ENCODE measurements at regions of chr11 and their contacts with region 1.

Region 1: GRCh38 chr11:73965076-73965860 is 14.4 kb downstream of the DNAJB13 start:
- DNase-seq: no peak
- ATAC-seq: 0 out of 2 replicates have a peak, but pooled peaks have one; percentile 6
- H3K4me3 ChIP-seq: no peak overlapping the region
- H3K27ac ChIP-seq: no peak overlapping the region
- H3K4me1 ChIP-seq: no peaks in the 10 kb centered on the region
- H3K27me3 ChIP-seq: no peaks in the 10 kb centered on the region
- CTCF ChIP-seq: no peak
- POLR2A ChIP-seq: no peak
- RAD21 ChIP-seq: no peak

Region 2: GRCh38 chr11:74090701-74091100 is 125.4 kb after region 1 on chr11:
- CTCF ChIA-PET with region 1: no interaction called
- POLR2A ChIA-PET with region 1: no interaction called
- dilution Hi-C with region 1: no loop called
- in situ Hi-C with region 1: no loop called
- intact Hi-C with region 1: loop called (anchors 1 kb)
- DNase-seq: peak; percentile 29
- ATAC-seq: no peak
- H3K4me3 ChIP-seq: no peak overlapping the region
- H3K27ac ChIP-seq: no peak overlapping the region
- H3K4me1 ChIP-seq: no peaks in the 10 kb centered on the region
- H3K27me3 ChIP-seq: no peaks in the 10 kb centered on the region
- CTCF ChIP-seq: peak; percentile 21; the same call in 1 of the 2 replicates
- POLR2A ChIP-seq: no peak
- RAD21 ChIP-seq: peak; percentile 23; the same call in 1 of the 2 replicates

Region 3: DNA sequence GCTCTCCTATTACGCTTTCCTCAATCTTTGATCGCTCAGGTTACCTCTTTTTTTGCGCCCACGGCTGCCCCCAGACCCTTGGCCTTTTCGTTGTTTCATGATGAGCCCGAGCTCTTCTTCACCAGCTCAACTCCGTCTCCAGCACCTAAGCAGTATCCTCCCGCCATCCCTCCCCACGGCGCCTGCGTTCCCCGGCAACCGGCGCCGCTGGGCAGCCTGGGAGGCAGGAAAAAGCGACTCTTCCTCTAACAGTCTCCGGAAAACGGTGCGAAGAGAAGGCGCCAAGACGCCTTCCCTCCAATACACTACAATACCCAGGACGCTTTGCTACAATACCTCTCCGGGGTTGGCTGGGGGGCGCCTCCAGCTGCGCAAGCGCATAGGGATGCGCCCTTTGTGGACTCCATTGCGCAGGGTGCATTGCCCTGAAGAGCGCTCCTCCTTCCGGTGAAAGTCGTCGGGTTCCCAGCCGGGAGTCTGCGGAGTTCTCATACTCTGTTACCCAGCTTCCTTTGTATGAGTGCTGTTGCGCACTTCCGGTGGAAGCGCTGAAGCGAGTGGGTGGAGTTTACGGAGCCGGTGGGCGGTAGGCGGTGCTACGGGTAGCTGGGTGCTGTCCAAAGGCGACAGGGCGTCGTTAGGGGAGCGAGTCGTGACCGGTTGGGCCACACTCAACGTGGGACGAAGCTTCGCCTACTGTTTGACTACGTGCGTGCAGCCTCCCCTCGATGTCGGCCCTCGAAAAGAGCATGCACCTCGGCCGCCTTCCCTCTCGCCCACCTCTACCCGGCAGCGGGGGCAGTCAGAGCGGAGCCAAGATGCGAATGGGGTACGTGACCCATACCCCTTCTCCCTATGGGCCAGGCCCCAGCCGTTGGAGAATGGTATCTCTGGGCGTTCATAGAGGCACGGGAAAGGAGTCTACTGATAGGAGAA is 205.7 kb after region 1 on chr11 and contains the starts of genes C2CD3 and PPME1:
- CTCF ChIA-PET with region 1: interaction called, 4 read pairs
- POLR2A ChIA-PET with region 1: no interaction called
- dilution Hi-C with region 1: no loop called
- in situ Hi-C with region 1: no loop called
- intact Hi-C with region 1: loop called (anchors 1 kb)
- DNase-seq: peak; percentile 100
- ATAC-seq: peak; percentile 97
- H3K4me3 ChIP-seq: peak within 1 kb of the TSS; percentile 70
- H3K27ac ChIP-seq: peak within 1 kb of the TSS; percentile 87
- H3K4me1 ChIP-seq: peaks cover 7% of the 10 kb centered on the region
- H3K27me3 ChIP-seq: no peaks in the 10 kb centered on the region
- CTCF ChIP-seq: peak; percentile 48
- POLR2A ChIP-seq: peak; percentile 90
- RAD21 ChIP-seq: peak; percentile 42
- total RNA-seq, gene C2CD3: 15.0 and 19.2 TPM in 2 replicates
- total RNA-seq, gene PPME1: 38.9 and 42.3 TPM in 2 replicates

Region 4: DNA sequence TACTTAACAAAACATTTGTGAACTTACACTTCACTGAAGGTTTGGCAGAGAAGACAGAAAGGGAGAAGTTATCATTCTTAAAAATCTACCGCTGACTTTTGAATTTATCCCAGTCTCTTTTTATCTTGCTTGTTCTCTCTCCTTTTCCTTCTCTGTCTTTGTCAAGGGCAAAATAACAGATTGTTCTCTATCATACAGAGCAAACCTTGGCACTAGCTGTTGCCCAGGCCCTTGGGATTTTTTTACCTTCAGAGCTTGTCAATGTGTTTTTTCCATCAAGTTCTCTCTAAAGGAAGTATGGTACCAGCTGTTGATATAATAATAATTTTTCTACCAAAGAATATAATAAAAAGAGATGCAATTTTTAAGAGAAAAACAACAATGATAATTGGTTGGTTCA is 273.0 kb after region 1 on chr11:
- CTCF ChIA-PET with region 1: no interaction called
- POLR2A ChIA-PET with region 1: no interaction called
- dilution Hi-C with region 1: no loop called
- in situ Hi-C with region 1: no loop called
- intact Hi-C with region 1: loop called (anchors 5 kb)
- DNase-seq: no peak
- ATAC-seq: no peak
- H3K4me3 ChIP-seq: no peak overlapping the region
- H3K27ac ChIP-seq: no peak overlapping the region
- H3K4me1 ChIP-seq: no peaks in the 10 kb centered on the region
- H3K27me3 ChIP-seq: no peaks in the 10 kb centered on the region
- CTCF ChIP-seq: no peak
- POLR2A ChIP-seq: no peak
- RAD21 ChIP-seq: no peak